Naive thymus-derived CD4-positive, alpha-beta T cell (primary cell): ENCODE measurements at regions of chr6 and their contacts with region 1.

Region 1: DNA sequence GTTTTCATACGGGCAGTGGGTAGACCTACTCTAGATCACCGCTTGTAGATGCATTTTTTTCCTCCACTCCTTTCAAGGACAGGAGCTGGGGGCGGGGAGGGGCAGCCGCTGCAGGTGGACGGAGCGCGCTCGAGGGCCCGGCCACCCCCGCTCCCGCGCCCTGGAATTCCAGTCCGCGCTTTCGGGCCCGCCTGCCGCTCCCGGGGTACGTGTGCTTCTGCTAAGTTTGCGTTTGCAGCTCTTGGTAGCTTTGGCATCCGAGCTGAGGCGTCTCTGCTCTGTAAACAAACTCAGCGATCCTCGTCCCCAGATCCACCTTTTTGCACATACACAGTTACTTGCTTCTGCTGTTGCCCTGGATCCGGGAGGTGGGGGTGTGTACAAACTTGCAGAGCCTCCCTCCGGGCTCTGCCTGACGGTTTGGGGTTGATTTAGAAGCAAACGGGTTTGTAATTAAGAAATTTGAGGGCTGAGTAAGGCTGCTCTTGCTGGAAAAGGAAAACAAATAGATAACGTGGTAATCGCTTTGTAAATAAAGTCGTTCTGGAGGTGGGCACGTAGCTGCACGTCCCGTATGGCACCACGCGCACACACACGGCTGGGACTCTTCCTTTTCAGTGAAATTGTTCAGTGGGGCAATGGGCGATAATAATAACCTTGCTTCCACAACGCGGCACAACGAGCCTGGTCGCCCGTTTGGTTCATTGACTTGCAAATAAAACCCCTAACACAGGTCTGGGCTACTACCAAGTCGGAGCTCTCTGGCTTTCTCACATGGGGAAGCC is 976 bp upstream of the CITED2 start:
- DNase-seq: peak; percentile 70 to 91 (median 88)
- ATAC-seq: peak; percentile 68
- H3K4me3 ChIP-seq: peak overlapping the region; percentile 71
- H3K4me3 Mint-ChIP-seq: peak overlapping the region; percentile 95 to 100 (median 100)
- H3K27ac ChIP-seq: peak overlapping the region; percentile 82
- H3K27ac Mint-ChIP-seq: peak overlapping the region; percentile 95 to 100 (median 98)
- H3K4me1 ChIP-seq: peaks cover 20 to 26% of the 10 kb centered on the region in 2 donors
- H3K4me1 Mint-ChIP-seq: peaks cover 21 to 38% (median 26%) of the 10 kb centered on the region in 7 donors
- H3K27me3 ChIP-seq: no peaks in the 10 kb centered on the region
- H3K27me3 Mint-ChIP-seq: no peaks in the 10 kb centered on the region

Region 2: GRCh38 chr6:138109042-138109997 is 1266.1 kb before region 1 on chr6:
- CTCF ChIA-PET with region 1: no interaction called
- POLR2A ChIA-PET with region 1: no interaction called
- intact Hi-C with region 1: loop called in 1 of 2 experiments (anchors 5 kb)
- DNase-seq: peak; percentile 47 to 77 (median 68)
- ATAC-seq: peak; percentile 84
- H3K4me3 ChIP-seq: no peak overlapping the region
- H3K4me3 Mint-ChIP-seq: peak overlapping the region in 4 of 10 donors; percentile 2 to 45 (median 7)
- H3K27ac ChIP-seq: no peak overlapping the region
- H3K27ac Mint-ChIP-seq: no peak overlapping the region
- H3K4me1 ChIP-seq: peaks cover 8 to 10% of the 10 kb centered on the region in 2 donors
- H3K4me1 Mint-ChIP-seq: peaks cover 14 to 27% (median 20%) of the 10 kb centered on the region in 7 donors
- H3K27me3 ChIP-seq: peaks cover 0 to 6% of the 10 kb centered on the region in 2 donors
- H3K27me3 Mint-ChIP-seq: peaks cover 34 to 56% (median 47%) of the 10 kb centered on the region in 5 donors

Region 3: DNA sequence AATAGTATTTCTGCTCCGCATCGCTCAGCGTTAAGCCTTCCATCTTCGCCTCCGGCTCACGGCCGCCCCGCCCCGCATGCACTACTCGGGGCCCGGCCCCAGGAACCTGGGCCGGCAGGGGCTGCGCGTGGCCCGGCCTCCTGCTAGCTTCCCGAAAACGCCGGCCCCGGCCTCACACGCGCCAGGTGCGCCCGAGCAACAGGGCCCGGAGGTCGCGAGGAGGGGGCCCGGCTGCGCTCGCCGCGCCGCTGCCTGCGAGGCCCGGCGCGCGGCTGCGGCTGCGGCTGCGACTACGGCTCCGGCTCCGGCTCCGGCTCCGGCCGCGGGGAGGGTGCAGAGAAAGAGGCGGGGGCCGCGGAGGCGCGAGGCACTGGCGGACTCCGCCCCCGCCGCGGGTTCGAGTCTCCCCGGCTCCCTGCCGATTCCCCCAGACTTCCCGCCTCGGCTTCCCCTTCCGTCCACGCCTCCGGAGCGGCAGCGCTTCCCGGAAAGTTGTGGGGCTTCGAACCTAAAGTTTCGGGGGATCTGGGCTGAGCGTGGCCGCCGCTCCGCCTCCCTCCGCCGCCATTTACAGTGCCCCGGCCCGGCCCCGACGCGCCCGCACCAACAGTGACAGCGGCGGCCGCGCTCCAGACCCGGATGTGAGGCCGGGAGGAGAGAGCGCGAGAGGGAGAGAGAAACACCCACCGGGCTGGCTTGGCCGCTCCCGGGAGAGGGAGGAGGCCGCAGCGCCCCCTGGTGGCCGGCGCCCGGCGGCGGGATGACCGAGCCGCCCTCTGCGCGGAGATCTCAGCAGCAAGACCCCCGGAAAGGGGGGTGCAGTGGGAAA is 387.6 kb before region 1 on chr6 and contains the start of gene REPS1:
- CTCF ChIA-PET with region 1: no interaction called
- POLR2A ChIA-PET with region 1: interaction called, 34 read pairs
- intact Hi-C with region 1: loop called (anchors 1 to 2 kb)
- DNase-seq: peak; percentile 83 to 97 (median 89)
- ATAC-seq: peak; percentile 95
- H3K4me3 ChIP-seq: peak within 1 kb of the TSS; percentile 61
- H3K4me3 Mint-ChIP-seq: peak within 1 kb of the TSS in 7 of 10 donors; percentile 86 to 94 (median 92)
- H3K27ac ChIP-seq: peak within 1 kb of the TSS; percentile 89
- H3K27ac Mint-ChIP-seq: peak within 1 kb of the TSS; percentile 84 to 96 (median 91)
- H3K4me1 ChIP-seq: peaks cover 32 to 40% of the 10 kb centered on the region in 2 donors
- H3K4me1 Mint-ChIP-seq: peaks cover 7 to 24% (median 13%) of the 10 kb centered on the region in 7 donors
- H3K27me3 ChIP-seq: no peaks in the 10 kb centered on the region
- H3K27me3 Mint-ChIP-seq: peaks cover 0 to 2% (median 0%) of the 10 kb centered on the region in 5 donors
- total RNA-seq, gene REPS1: 55.9 to 74.6 (median 69.7) TPM

Region 4: GRCh38 chr6:139134817-139135581 is 240.4 kb before region 1 on chr6 and contains the start of gene HECA:
- CTCF ChIA-PET with region 1: interaction called, 4 read pairs
- POLR2A ChIA-PET with region 1: interaction called, 48 read pairs
- intact Hi-C with region 1: loop called (anchors 1 kb)
- DNase-seq: peak; percentile 99 to 100 (median 99)
- ATAC-seq: peak; percentile 91
- H3K4me3 ChIP-seq: peak within 1 kb of the TSS; percentile 93
- H3K4me3 Mint-ChIP-seq: peak within 1 kb of the TSS; percentile 84 to 99 (median 93)
- H3K27ac ChIP-seq: peak within 1 kb of the TSS; percentile 100
- H3K27ac Mint-ChIP-seq: peak within 1 kb of the TSS; percentile 95 to 100 (median 99)
- H3K4me1 ChIP-seq: peaks cover 21 to 43% of the 10 kb centered on the region in 2 donors
- H3K4me1 Mint-ChIP-seq: peaks cover 51 to 77% (median 66%) of the 10 kb centered on the region in 7 donors
- H3K27me3 ChIP-seq: no peaks in the 10 kb centered on the region
- H3K27me3 Mint-ChIP-seq: peaks cover 0 to 2% (median 0%) of the 10 kb centered on the region in 5 donors
- total RNA-seq, gene HECA: 54.1 to 145 (median 130) TPM

Region 5: GRCh38 chr6:139323511-139324300 is 51.7 kb before region 1 on chr6:
- CTCF ChIA-PET with region 1: interaction called, 3 read pairs
- POLR2A ChIA-PET with region 1: interaction called, 22 read pairs
- intact Hi-C with region 1: loop called (anchors 1 to 2 kb)
- DNase-seq: peak; percentile 54 to 90 (median 86)
- ATAC-seq: peak; percentile 90
- H3K4me3 ChIP-seq: peak overlapping the region; percentile 64
- H3K4me3 Mint-ChIP-seq: peak overlapping the region; percentile 80 to 96 (median 90)
- H3K27ac ChIP-seq: peak overlapping the region; percentile 83
- H3K27ac Mint-ChIP-seq: peak overlapping the region; percentile 96 to 100 (median 99)
- H3K4me1 ChIP-seq: peaks cover 12 to 19% of the 10 kb centered on the region in 2 donors
- H3K4me1 Mint-ChIP-seq: peaks cover 19 to 44% (median 32%) of the 10 kb centered on the region in 7 donors
- H3K27me3 ChIP-seq: no peaks in the 10 kb centered on the region
- H3K27me3 Mint-ChIP-seq: no peaks in the 10 kb centered on the region

Region 6: GRCh38 chr6:139422105-139423036 is 46.9 kb after region 1 on chr6:
- CTCF ChIA-PET with region 1: no interaction called
- POLR2A ChIA-PET with region 1: no interaction called
- intact Hi-C with region 1: no loop called
- DNase-seq: no peak
- ATAC-seq: no peak
- H3K4me3 ChIP-seq: no peak overlapping the region
- H3K4me3 Mint-ChIP-seq: no peak overlapping the region
- H3K27ac ChIP-seq: no peak overlapping the region
- H3K27ac Mint-ChIP-seq: no peak overlapping the region
- H3K4me1 ChIP-seq: no peaks in the 10 kb centered on the region
- H3K4me1 Mint-ChIP-seq: peaks cover 0 to 2% (median 0%) of the 10 kb centered on the region in 7 donors
- H3K27me3 ChIP-seq: no peaks in the 10 kb centered on the region
- H3K27me3 Mint-ChIP-seq: peaks cover 5 to 39% (median 12%) of the 10 kb centered on the region in 5 donors

Region 7: DNA sequence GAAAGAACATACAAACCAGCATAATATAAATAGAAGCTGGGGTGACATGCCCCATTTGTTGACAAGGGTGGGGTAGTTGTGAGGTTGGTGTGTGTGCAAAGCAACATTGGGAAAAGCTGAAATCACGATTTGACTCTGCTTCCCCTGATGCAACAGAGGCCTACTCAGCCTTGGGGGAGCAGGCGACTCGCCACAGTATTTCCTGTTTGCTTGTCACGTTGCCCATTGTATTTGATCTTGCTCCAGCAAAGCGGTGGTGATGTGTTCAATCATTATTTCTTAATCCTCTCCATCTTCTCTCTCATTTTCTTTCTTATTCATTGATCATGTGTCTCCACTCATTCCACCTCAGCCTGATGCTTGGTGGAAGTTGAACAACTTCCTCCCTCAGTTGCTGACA is 164.9 kb after region 1 on chr6:
- CTCF ChIA-PET with region 1: no interaction called
- POLR2A ChIA-PET with region 1: interaction called, 3 read pairs
- intact Hi-C with region 1: loop called (anchors 1 to 10 kb)
- DNase-seq: peak in 6 of 9 donors; percentile 13 to 51 (median 34)
- ATAC-seq: peak; percentile 83
- H3K4me3 ChIP-seq: no peak overlapping the region
- H3K4me3 Mint-ChIP-seq: peak overlapping the region in 4 of 10 donors; percentile 1 to 78 (median 11)
- H3K27ac ChIP-seq: no peak overlapping the region
- H3K27ac Mint-ChIP-seq: peak overlapping the region in 5 of 9 donors; percentile 7 to 85 (median 45)
- H3K4me1 ChIP-seq: peaks cover 0 to 29% of the 10 kb centered on the region in 2 donors
- H3K4me1 Mint-ChIP-seq: peaks cover 13 to 69% (median 16%) of the 10 kb centered on the region in 7 donors
- H3K27me3 ChIP-seq: no peaks in the 10 kb centered on the region
- H3K27me3 Mint-ChIP-seq: no peaks in the 10 kb centered on the region

Region 8: GRCh38 chr6:139996253-139996834 is 620.9 kb after region 1 on chr6:
- CTCF ChIA-PET with region 1: no interaction called
- POLR2A ChIA-PET with region 1: no interaction called
- intact Hi-C with region 1: no loop called
- DNase-seq: no peak
- ATAC-seq: no peak
- H3K4me3 ChIP-seq: no peak overlapping the region
- H3K4me3 Mint-ChIP-seq: no peak overlapping the region
- H3K27ac ChIP-seq: no peak overlapping the region
- H3K27ac Mint-ChIP-seq: no peak overlapping the region
- H3K4me1 ChIP-seq: no peaks in the 10 kb centered on the region
- H3K4me1 Mint-ChIP-seq: peaks cover 0 to 2% (median 0%) of the 10 kb centered on the region in 7 donors
- H3K27me3 ChIP-seq: no peaks in the 10 kb centered on the region
- H3K27me3 Mint-ChIP-seq: peaks cover 0 to under 1% (median 0%) of the 10 kb centered on the region in 5 donors

Region 9: DNA sequence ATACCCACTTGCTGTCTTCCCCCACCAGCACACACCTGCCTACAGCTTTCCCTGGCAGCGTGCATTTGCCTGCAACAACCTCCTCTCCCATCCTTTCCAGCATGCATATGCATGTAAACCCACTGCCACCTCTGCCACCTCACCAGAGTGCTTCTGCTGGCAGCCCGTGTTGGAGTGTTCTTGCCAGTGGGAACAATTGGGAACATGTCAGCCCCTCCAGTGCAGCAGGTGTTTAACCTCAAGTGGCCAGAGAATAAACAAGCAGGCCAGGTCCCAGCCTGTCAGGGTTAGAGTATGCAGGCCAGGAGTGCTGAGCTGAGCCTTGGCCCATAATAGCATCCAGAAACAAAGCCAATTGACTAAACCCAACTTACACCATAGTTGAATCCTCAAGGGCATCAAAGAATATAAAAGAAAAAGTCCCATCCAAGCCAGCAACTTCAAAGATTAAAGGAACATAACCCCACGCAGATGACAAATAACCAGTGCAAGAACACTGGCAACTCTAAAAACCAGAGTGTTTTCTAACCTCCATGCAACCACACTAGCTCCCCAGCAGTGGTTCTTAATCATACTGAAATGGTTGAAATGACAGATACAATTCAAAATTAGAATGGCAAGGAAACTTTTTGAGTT is 1211.1 kb after region 1 on chr6:
- CTCF ChIA-PET with region 1: no interaction called
- POLR2A ChIA-PET with region 1: no interaction called
- intact Hi-C with region 1: loop called in 1 of 2 experiments (anchors 5 kb)
- DNase-seq: peak in 1 of 9 donors; percentile 35
- ATAC-seq: no peak
- H3K4me3 ChIP-seq: no peak overlapping the region
- H3K4me3 Mint-ChIP-seq: peak overlapping the region in 1 of 10 donors; percentile 53
- H3K27ac ChIP-seq: no peak overlapping the region
- H3K27ac Mint-ChIP-seq: peak overlapping the region in 2 of 9 donors; percentile 17 to 90
- H3K4me1 ChIP-seq: no peaks in the 10 kb centered on the region
- H3K4me1 Mint-ChIP-seq: peaks cover 0 to 47% (median 0%) of the 10 kb centered on the region in 7 donors
- H3K27me3 ChIP-seq: no peaks in the 10 kb centered on the region
- H3K27me3 Mint-ChIP-seq: peaks cover 0 to 5% (median 0%) of the 10 kb centered on the region in 5 donors